ENCODE measurements at regions of chr14 and their contacts with region 1.

Region 1: DNA sequence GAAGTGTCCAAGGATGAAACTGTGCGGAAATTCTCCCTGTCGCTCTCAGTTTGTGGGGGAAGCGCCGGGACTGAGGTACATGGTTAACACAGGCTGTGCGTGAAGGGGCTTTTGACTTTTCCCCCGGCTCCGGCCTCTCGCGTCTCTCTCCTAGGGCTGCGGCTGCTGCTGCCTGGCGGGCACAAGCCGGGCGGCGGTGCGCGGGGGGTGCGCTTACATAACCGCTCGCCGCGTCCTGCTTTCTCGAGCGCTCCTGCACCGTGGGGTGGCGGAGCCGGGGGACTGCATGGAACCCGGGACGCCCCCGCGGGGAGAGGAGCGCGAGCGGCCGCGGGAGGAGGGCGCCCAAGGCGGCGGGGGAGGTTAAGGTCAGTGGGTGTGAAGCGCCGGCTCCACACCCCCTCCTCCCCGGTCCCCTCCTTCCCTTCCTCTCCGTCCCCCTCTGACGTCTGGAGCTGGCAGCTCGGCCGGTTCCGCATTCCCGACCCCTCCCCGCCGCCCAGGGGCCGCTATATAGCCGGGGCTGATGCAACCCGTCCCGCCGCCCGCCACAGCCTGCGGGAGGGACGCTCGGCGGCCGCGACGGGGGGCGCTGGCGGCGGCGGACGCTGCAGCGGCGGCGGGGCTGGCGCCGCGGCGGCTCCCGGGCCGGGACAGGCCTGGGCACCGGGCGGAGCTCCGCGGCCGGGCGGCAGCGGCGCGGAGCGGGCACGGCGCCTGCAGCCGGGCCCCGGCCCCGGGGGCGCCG is at the start of gene JDP2:
- DNase-seq: peak; percentile 81 to 91 (median 90)
- H3K4me3 ChIP-seq: peak within 1 kb of the TSS; percentile 67 to 81 (median 74)
- H3K27ac ChIP-seq: peak within 1 kb of the TSS in 1 of 2 experiments; percentile 23
- H3K4me1 ChIP-seq: peaks cover 0 to 56% (median 32%) of the 10 kb centered on the region in 4 experiments
- H3K27me3 ChIP-seq: no peaks in the 10 kb centered on the region

Region 2: DNA sequence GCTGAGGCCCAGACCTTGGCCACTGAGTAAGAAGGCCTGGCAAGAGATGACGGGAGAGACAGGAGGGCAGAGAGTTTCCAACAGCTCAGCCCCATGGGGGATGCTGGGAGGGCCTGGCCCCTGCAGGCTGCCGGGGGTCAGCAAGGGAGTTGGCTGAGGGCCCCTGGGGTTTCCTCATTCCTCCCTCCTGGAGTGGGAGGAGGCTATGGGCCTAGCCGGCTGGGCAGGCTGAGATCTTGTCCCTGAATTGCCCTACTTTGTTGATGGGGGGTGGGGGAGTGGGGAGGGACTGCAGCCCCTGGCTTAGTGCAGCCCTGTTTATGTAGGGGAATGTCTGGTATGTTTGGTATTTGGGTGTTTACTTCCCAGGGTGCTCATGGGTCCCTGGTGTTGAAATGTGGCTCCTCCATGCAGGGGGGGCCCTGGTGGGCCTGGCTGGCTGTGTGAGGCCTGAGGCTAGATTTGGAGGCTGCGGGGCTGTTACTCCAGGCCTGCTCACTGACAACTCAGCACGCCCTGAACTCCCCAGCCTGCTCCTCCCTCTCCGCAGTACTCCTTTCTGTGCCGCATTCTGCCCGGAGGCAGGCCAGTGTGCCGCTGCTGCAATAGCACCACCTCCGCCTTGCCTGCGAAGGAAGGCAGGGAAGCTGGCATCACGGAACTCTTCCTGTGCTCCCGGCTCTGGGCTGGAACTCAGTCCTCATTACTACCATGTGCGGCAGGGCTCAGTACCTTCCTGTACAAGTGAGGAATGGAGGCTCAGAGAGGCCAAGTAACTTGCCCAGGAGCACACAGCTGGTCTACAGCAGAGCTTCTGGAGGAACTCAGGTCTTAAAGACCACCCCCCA is 25.5 kb after region 1 on chr14:
- CTCF ChIA-PET with region 1: interaction called, 227 read pairs
- POLR2A ChIA-PET with region 1: interaction called, 4 read pairs
- DNase-seq: no peak
- H3K4me3 ChIP-seq: no peak overlapping the region
- H3K27ac ChIP-seq: no peak overlapping the region
- H3K4me1 ChIP-seq: peaks cover 4 to 83% (median 55%) of the 10 kb centered on the region in 4 experiments
- H3K27me3 ChIP-seq: no peaks in the 10 kb centered on the region

Region 3: GRCh38 chr14:75476274-75476995 is 48.8 kb after region 1 on chr14:
- CTCF ChIA-PET with region 1: no interaction called
- POLR2A ChIA-PET with region 1: no interaction called
- DNase-seq: no peak
- H3K4me3 ChIP-seq: no peak overlapping the region
- H3K27ac ChIP-seq: no peak overlapping the region
- H3K4me1 ChIP-seq: peaks cover 0 to 7% (median 0%) of the 10 kb centered on the region in 4 experiments
- H3K27me3 ChIP-seq: no peaks in the 10 kb centered on the region

Measured in common myeloid progenitor, CD34-positive (primary cell).